ENCODE measurements at regions of chr20 and their contacts with region 1.

Region 1: DNA sequence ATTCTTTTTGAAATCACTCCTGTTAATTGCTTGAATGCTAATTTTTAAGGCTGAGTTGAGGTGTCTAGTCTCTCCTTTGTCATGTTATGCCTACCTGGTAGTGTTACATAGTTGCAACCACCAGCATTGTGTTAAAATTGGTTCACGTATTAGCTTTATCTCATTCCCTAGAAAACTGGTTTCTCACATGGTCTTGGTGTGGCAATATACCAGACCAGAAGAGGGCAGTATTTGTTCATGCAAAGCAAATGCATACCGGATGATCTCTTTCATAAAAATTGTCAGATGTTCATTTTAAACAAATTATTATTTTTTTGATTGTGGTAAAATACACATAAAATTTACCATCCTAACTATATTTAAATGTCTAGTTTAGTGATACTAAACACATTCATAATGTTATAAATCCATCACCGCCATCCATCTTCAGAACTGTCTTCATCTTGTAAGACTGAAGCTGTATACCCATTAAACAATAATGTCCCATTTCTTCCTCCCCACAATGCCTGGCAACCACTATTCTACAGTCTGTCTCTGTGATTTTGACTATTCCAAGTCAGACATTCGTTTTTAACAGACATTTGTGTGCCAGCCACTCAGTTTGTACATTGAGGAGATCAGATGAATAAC is 92.8 kb downstream of the ATRN start:
- DNase-seq: peak; percentile 32
- CTCF ChIP-seq: peak; percentile 67

Region 2: GRCh38 chr20:3539311-3540107 is 24.2 kb before region 1 on chr20:
- CTCF ChIA-PET with region 1: no interaction called
- POLR2A ChIA-PET with region 1: no interaction called
- DNase-seq: no peak
- CTCF ChIP-seq: no peak

Region 3: GRCh38 chr20:3551681-3552434 is 11.8 kb before region 1 on chr20:
- CTCF ChIA-PET with region 1: interaction called, 20 read pairs
- POLR2A ChIA-PET with region 1: no interaction called
- DNase-seq: no peak
- CTCF ChIP-seq: no peak

Region 4: DNA sequence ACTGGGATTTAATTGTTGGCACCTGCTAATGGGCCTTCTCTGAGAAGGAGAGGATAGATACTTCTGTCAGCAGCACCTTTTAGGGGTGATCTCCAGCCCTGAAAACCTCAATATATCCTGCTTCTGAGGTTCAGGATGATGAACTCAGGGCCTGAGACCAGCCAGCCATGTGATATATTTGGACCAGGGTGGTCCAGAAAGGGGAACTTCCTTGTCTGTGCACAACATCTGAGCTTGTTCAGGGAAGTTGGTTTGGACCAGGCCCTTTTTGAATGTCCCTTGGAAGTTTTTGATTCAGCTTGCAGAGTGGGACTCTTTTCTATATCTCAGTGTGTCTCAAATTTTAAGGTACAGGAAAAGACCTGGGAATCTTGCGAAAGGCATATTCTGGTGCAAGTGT is 13.7 kb after region 1 on chr20:
- CTCF ChIA-PET with region 1: interaction called, 15 read pairs
- POLR2A ChIA-PET with region 1: no interaction called
- DNase-seq: no peak
- CTCF ChIP-seq: no peak

Region 5: DNA sequence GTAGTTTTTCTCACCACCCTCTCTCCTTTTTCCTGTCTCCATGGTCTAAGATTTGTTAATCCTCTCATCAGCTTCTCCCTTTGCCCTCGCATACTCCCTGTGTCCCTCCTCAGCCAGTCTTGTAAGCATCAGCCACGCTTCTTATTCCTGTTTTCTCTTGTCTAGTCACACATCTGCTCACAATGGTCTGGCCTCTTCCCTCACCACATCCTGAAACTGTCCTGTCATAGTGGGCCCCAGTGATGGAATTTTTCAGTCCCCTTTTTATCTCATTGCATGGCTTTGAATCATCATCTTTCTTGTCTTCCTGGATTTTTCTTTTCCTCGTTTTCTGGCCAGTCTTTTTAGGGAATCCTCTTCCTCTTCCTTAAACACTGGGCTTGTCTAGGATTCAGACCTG is 42.4 kb after region 1 on chr20:
- CTCF ChIA-PET with region 1: no interaction called
- POLR2A ChIA-PET with region 1: no interaction called
- DNase-seq: no peak
- CTCF ChIP-seq: no peak

Region 6: GRCh38 chr20:3696200-3696599 is 132.5 kb after region 1 on chr20:
- CTCF ChIA-PET with region 1: no interaction called
- POLR2A ChIA-PET with region 1: no interaction called
- DNase-seq: no peak
- CTCF ChIP-seq: peak; percentile 17